IMR-90 (cell line): ENCODE measurements at regions of chr9 and their contacts with region 1.

Region 1: GRCh38 chr9:15416880-15417279 is 5.8 kb upstream of the SNAPC3 start:
- DNase-seq: peak; percentile 65
- ATAC-seq: peak; percentile 91
- H3K4me3 ChIP-seq: no peak overlapping the region
- H3K27ac ChIP-seq: no peak overlapping the region
- H3K4me1 ChIP-seq: no peaks in the 10 kb centered on the region
- H3K27me3 ChIP-seq: no peaks in the 10 kb centered on the region
- CTCF ChIP-seq: peak; percentile 77
- POLR2A ChIP-seq: no peak
- RAD21 ChIP-seq: peak; percentile 79

Region 2: GRCh38 chr9:13878241-13878711 is 1538.6 kb before region 1 on chr9:
- CTCF ChIA-PET with region 1: no interaction called
- POLR2A ChIA-PET with region 1: no interaction called
- dilution Hi-C with region 1: no loop called
- in situ Hi-C with region 1: no loop called
- intact Hi-C with region 1: no loop called
- DNase-seq: no peak
- ATAC-seq: no peak
- H3K4me3 ChIP-seq: no peak overlapping the region
- H3K27ac ChIP-seq: no peak overlapping the region
- H3K4me1 ChIP-seq: no peaks in the 10 kb centered on the region
- H3K27me3 ChIP-seq: no peaks in the 10 kb centered on the region
- CTCF ChIP-seq: no peak
- POLR2A ChIP-seq: no peak
- RAD21 ChIP-seq: no peak

Region 3: GRCh38 chr9:15211160-15211814 is 205.6 kb before region 1 on chr9:
- CTCF ChIA-PET with region 1: interaction called, 6 read pairs
- POLR2A ChIA-PET with region 1: no interaction called
- dilution Hi-C with region 1: no loop called
- in situ Hi-C with region 1: loop called (anchors 10 kb)
- intact Hi-C with region 1: loop called (anchors 1 kb)
- DNase-seq: peak; percentile 79
- ATAC-seq: peak; percentile 78
- H3K4me3 ChIP-seq: no peak overlapping the region
- H3K27ac ChIP-seq: no peak overlapping the region; the same call in 1 of the 2 replicates
- H3K4me1 ChIP-seq: peaks cover 2% of the 10 kb centered on the region
- H3K27me3 ChIP-seq: no peaks in the 10 kb centered on the region
- CTCF ChIP-seq: peak; percentile 87
- POLR2A ChIP-seq: no peak; the same call in 1 of the 2 replicates
- RAD21 ChIP-seq: peak; percentile 88

Region 4: DNA sequence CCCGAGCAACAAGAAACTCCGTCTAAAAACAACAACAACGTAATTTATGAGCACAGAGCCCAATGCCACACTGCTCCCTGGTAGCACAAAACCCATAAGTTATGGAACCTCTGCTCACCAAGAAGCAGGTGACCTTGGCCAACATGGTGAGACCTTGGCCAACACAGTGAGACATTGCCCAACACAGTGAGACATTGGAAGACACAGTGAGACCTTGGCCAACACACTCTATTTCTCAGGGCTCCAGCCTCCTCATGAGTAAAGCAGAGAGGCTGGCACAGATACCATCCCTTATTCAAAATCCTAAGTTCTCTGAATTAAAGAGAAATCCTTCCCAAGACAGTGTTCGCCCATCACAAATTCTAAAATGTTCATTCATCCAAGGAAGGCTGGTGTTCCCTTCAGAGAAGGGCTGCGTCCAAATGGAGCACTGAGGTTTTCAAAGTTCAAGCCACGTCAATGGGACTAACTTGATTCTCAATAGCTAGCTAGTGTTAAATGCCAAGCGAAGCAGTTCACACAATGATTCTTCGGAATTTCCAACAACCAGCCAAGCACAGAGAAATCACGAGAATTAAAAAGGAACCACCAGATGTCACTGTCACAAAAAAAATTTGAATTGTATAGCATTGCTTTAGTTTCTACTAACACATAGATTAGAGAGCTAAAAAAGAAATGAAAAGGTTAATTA is 139.3 kb before region 1 on chr9:
- CTCF ChIA-PET with region 1: interaction called, 5 read pairs
- POLR2A ChIA-PET with region 1: interaction called, 3 read pairs
- dilution Hi-C with region 1: no loop called
- in situ Hi-C with region 1: no loop called
- intact Hi-C with region 1: loop called (anchors 1 kb)
- DNase-seq: peak; percentile 25
- ATAC-seq: peak; percentile 44; the same call in 1 of the 2 replicates
- H3K4me3 ChIP-seq: no peak overlapping the region
- H3K27ac ChIP-seq: no peak overlapping the region
- H3K4me1 ChIP-seq: no peaks in the 10 kb centered on the region
- H3K27me3 ChIP-seq: no peaks in the 10 kb centered on the region
- CTCF ChIP-seq: peak; percentile 51
- POLR2A ChIP-seq: no peak
- RAD21 ChIP-seq: peak; percentile 50